Esophagus muscularis mucosa (tissue), 4 donors: ENCODE measurements at regions of chr12 and their contacts with region 1.

Region 1: DNA sequence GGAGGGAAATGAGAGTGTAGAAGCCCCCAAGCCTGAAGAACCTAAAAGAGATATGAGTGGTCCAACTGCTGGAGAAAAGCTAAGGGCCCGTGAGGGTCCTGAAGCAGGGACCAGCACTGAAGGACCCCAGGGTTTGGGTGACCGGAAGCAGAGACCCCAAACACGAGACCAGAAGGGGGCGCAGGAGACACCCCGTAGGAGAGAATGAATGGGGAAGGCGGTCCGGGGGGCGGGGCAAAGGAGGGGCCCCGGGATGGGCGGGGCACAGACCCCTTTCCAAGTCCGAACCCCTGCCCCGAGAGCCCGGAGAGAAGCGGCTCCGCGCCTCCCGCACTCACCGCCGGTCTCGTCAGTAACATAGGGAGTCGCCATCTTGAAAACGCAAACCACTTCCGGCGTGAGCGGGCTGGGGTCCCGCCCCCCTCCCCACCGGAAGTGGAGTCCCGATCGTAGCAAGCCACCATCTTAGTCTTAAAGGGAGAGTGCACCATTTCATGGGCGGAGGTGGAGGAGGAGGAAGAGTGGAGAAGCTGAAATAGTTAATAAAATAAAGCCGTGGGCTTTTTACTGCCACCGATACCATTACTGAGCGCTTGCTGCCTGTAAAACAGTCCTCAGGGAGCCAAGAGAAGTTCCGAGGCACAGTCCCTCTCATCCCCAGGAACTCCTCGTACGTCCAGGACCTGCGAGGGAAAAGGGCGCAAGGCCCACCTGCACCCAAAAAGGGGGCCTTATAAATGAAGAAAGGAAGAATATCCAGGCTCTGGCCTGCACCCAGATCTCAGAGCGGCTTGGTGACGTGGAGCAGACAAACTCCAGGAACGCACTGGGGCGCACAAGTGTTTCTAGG is 731 bp downstream of the PYM1 start:
- DNase-seq: peak; percentile 98
- H3K4me3 ChIP-seq: peak overlapping the region; percentile 79 to 90 (median 89)
- H3K27ac ChIP-seq: peak overlapping the region; percentile 92 to 98 (median 96)
- H3K4me1 ChIP-seq: peaks cover 32 to 58% (median 49%) of the 10 kb centered on the region in 4 donors
- H3K27me3 ChIP-seq: no peaks in the 10 kb centered on the region
- CTCF ChIP-seq: peak; percentile 70 to 82 (median 81)
- EP300 ChIP-seq: no peak
- POLR2A ChIP-seq: no peak

Region 2: GRCh38 chr12:55829967-55830600 is 96.9 kb before region 1 on chr12:
- intact Hi-C with region 1: loop called (anchors 5 kb)
- DNase-seq: no peak
- H3K4me3 ChIP-seq: peak overlapping the region; percentile 81 to 98 (median 86)
- H3K27ac ChIP-seq: peak overlapping the region; percentile 88 to 94 (median 92)
- H3K4me1 ChIP-seq: peaks cover 44 to 73% (median 68%) of the 10 kb centered on the region in 4 donors
- H3K27me3 ChIP-seq: no peaks in the 10 kb centered on the region
- CTCF ChIP-seq: no peak
- EP300 ChIP-seq: no peak
- POLR2A ChIP-seq: no peak

Region 3: DNA sequence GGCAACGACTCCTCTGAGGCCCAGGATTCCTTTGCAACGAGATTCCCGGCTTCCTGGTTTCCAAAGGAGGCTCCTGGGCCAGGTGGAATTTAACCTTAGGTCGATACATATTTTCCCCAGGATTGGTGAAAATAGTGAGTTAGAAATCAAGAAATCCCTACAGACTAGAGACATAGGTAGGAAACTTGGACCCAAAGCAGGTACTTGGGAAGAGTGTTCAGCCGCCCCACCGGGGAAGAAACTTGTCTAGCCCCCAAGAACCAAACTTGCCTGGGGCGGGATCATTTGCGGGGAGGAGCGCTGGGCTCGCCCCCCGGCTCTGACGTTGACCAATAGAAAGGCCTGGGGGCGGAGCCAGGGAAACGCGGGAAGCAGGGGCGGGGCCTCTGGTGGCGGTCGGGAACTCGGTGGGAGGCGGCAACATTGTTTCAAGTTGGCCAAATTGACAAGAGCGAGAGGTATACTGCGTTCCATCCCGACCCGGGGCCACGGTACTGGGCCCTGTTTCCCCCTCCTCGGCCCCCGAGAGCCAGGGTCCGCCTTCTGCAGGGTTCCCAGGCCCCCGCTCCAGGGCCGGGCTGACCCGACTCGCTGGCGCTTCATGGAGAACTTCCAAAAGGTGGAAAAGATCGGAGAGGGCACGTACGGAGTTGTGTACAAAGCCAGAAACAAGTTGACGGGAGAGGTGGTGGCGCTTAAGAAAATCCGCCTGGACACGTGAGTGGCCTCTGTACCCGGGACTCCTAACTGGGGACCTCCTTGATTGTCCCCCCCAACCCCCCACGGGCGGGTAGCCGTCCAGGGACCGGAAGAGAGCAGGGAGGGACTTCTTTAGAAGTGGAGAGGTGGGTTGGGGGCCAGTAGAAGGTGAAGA is 39.7 kb after region 1 on chr12 and contains the start of gene CDK2:
- intact Hi-C with region 1: loop called (anchors 5 kb)
- DNase-seq: peak; percentile 99
- H3K4me3 ChIP-seq: peak within 1 kb of the TSS; percentile 72 to 92 (median 84)
- H3K27ac ChIP-seq: peak within 1 kb of the TSS; percentile 87 to 91 (median 90)
- H3K4me1 ChIP-seq: peaks cover 13 to 45% (median 37%) of the 10 kb centered on the region in 4 donors
- H3K27me3 ChIP-seq: no peaks in the 10 kb centered on the region
- CTCF ChIP-seq: no peak
- EP300 ChIP-seq: no peak
- POLR2A ChIP-seq: peak; percentile 74
- total RNA-seq, gene CDK2: 35.3 to 84.9 (median 57.1) TPM